HCT116 (cell line): ENCODE measurements at regions of chr1 and their contacts with region 1.

Region 1: DNA sequence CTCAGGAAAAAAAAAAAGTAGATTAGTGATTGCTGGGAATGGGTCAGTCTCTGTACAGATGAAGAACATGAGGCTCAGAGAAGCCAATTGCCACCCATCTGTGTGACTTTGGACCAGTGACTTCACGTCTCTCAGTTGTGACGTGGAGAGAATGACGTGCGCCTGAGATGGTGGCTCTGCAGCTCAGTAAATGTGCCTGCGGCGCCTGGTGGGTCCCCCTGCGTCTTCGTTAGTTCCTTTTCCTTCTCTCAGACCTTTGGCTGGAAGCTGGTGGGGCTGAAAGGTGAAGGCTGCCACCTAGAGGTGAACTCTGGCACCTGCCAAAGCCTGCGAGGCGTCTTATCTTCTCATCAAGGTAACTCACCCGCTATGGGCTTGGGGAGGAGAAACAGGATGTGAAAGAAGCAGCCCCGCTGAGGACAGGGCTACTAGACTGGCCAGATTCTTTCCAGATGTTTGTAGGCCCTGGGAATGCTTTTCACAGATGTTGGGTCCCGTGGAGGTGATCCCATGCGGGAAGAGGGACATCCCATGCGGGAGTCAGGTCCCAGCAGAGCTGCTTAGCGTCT is 8.7 kb upstream of the E2F2 start:
- DNase-seq: peak; percentile 94
- ATAC-seq: peak; percentile 89
- H3K4me3 ChIP-seq: peak overlapping the region; percentile 24 to 42
- H3K27ac ChIP-seq: no peak overlapping the region
- H3K4me1 ChIP-seq: peaks cover 5 to 32% of the 10 kb centered on the region in 2 experiments
- H3K27me3 ChIP-seq: no peaks in the 10 kb centered on the region
- CTCF ChIP-seq: peak; percentile 97 to 98 (median 97)
- POLR2A ChIP-seq: no peak
- RAD21 ChIP-seq: peak; percentile 99

Region 2: GRCh38 chr1:23216771-23217420 is 322.9 kb before region 1 on chr1:
- CTCF ChIA-PET with region 1: interaction called, 5 read pairs
- POLR2A ChIA-PET with region 1: no interaction called
- RAD21 ChIA-PET with region 1: interaction called in 1 of 2 experiments, 3 read pairs
- intact Hi-C with region 1: loop called (anchors 10 kb)
- DNase-seq: no peak
- ATAC-seq: peak; percentile 80
- H3K4me3 ChIP-seq: peak overlapping the region; percentile 51 to 66
- H3K27ac ChIP-seq: peak overlapping the region; percentile 51; the same call in 1 of the 2 replicates
- H3K4me1 ChIP-seq: peaks cover 0 to 27% of the 10 kb centered on the region in 2 experiments; a peak in 3 of 4 replicates
- H3K27me3 ChIP-seq: no peaks in the 10 kb centered on the region; the same call in 1 of the 2 replicates
- CTCF ChIP-seq: peak; percentile 43 to 83 (median 76); a peak in 5 of 6 replicates
- POLR2A ChIP-seq: no peak
- RAD21 ChIP-seq: peak; percentile 70

Region 3: DNA sequence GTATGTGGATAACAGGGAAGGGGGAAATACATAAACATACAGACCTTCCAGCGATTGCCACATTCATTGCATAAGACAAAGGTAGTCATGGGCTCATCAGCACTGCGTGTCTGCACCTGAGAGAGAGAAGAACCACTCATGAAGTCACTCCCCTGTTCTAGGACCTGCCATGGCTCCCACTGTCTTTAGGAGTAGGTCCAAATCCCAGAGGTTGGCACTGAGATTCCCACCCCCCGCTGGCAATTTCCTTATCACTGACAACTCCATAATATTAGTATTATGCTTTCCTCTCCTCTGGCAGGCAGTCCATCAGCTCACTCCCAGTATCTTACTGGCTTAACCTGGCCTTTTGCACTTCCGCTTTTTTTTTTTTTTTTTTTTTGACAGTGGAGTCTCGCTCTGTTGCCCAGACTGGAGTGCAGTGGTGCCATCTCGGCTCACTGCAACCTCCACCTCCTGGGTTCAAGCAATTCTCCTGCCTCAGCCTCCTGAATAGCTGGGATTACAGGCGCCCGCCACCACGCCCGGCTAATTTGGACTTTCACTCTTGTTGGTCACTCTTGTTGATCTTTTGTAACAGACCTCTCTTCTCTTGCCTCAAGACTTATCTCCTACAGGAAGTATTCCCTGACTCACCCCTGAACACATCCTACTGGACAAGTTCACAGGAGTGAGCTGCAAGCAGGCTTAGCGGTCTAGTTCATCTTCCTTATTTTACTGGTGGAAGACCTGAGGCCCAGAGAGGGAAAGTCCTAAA is 155.3 kb before region 1 on chr1:
- CTCF ChIA-PET with region 1: no interaction called
- POLR2A ChIA-PET with region 1: no interaction called
- RAD21 ChIA-PET with region 1: no interaction called
- intact Hi-C with region 1: no loop called
- DNase-seq: no peak
- ATAC-seq: no peak
- H3K4me3 ChIP-seq: no peak overlapping the region
- H3K27ac ChIP-seq: no peak overlapping the region
- H3K4me1 ChIP-seq: peaks cover 3 to 17% of the 10 kb centered on the region in 2 experiments; a peak in 2 of 4 replicates
- H3K27me3 ChIP-seq: no peaks in the 10 kb centered on the region
- CTCF ChIP-seq: no peak
- POLR2A ChIP-seq: no peak
- RAD21 ChIP-seq: no peak

Region 4: GRCh38 chr1:23496490-23497181 is 43.1 kb before region 1 on chr1:
- CTCF ChIA-PET with region 1: interaction called, 114 read pairs
- POLR2A ChIA-PET with region 1: interaction called, 9 read pairs
- RAD21 ChIA-PET with region 1: interaction called, 14 to 31 read pairs
- intact Hi-C with region 1: loop called (anchors 1 kb)
- DNase-seq: no peak
- ATAC-seq: peak; percentile 49
- H3K4me3 ChIP-seq: no peak overlapping the region
- H3K27ac ChIP-seq: 0 out of 2 replicates have a peak overlapping the region, but pooled peaks have one; percentile 10
- H3K4me1 ChIP-seq: peaks cover 0 to 3% of the 10 kb centered on the region in 2 experiments; a peak in 1 of 4 replicates
- H3K27me3 ChIP-seq: no peaks in the 10 kb centered on the region
- CTCF ChIP-seq: no peak
- POLR2A ChIP-seq: no peak
- RAD21 ChIP-seq: no peak

Region 5: GRCh38 chr1:23591460-23592208 is 51.9 kb after region 1 on chr1:
- CTCF ChIA-PET with region 1: no interaction called
- POLR2A ChIA-PET with region 1: no interaction called
- RAD21 ChIA-PET with region 1: no interaction called
- intact Hi-C with region 1: no loop called
- DNase-seq: no peak
- ATAC-seq: no peak
- H3K4me3 ChIP-seq: no peak overlapping the region
- H3K27ac ChIP-seq: no peak overlapping the region
- H3K4me1 ChIP-seq: peaks cover 17 to 40% of the 10 kb centered on the region in 2 experiments
- H3K27me3 ChIP-seq: no peaks in the 10 kb centered on the region
- CTCF ChIP-seq: no peak
- POLR2A ChIP-seq: no peak
- RAD21 ChIP-seq: no peak

Region 6: GRCh38 chr1:23664837-23665795 is 125.3 kb after region 1 on chr1:
- CTCF ChIA-PET with region 1: interaction called, 3 read pairs
- POLR2A ChIA-PET with region 1: interaction called, 3 read pairs
- RAD21 ChIA-PET with region 1: no interaction called
- intact Hi-C with region 1: loop called (anchors 1 kb)
- DNase-seq: peak; percentile 34
- ATAC-seq: peak; percentile 63
- H3K4me3 ChIP-seq: no peak overlapping the region
- H3K27ac ChIP-seq: no peak overlapping the region
- H3K4me1 ChIP-seq: no peaks in the 10 kb centered on the region; a peak in 1 of 4 replicates
- H3K27me3 ChIP-seq: no peaks in the 10 kb centered on the region
- CTCF ChIP-seq: peak; percentile 43 to 63 (median 52); a peak in 5 of 6 replicates
- POLR2A ChIP-seq: no peak
- RAD21 ChIP-seq: peak; percentile 72